Breast epithelium (tissue), 4 donors: ENCODE measurements at regions of chr20 and their contacts with region 1.

Region 1: GRCh38 chr20:44609511-44610312 is 27.3 kb downstream of the PKIG start:
- DNase-seq: peak; percentile 86 to 88
- H3K4me3 ChIP-seq: peak overlapping the region in 2 of 3 donors; percentile 20 to 32
- H3K27ac ChIP-seq: peak overlapping the region; percentile 60 to 86
- H3K4me1 ChIP-seq: no peaks in the 10 kb centered on the region
- H3K27me3 ChIP-seq: no peaks in the 10 kb centered on the region
- CTCF ChIP-seq: peak; percentile 86 to 99 (median 96)
- POLR2A ChIP-seq: no peak

Region 2: GRCh38 chr20:44204155-44204831 is 405.4 kb before region 1 on chr20:
- intact Hi-C with region 1: no loop called
- DNase-seq: no peak
- H3K4me3 ChIP-seq: no peak overlapping the region
- H3K27ac ChIP-seq: peak overlapping the region; percentile 81 to 86
- H3K4me1 ChIP-seq: peaks cover 0 to 12% of the 10 kb centered on the region in 2 donors
- H3K27me3 ChIP-seq: no peaks in the 10 kb centered on the region
- CTCF ChIP-seq: no peak
- POLR2A ChIP-seq: no peak

Region 3: DNA sequence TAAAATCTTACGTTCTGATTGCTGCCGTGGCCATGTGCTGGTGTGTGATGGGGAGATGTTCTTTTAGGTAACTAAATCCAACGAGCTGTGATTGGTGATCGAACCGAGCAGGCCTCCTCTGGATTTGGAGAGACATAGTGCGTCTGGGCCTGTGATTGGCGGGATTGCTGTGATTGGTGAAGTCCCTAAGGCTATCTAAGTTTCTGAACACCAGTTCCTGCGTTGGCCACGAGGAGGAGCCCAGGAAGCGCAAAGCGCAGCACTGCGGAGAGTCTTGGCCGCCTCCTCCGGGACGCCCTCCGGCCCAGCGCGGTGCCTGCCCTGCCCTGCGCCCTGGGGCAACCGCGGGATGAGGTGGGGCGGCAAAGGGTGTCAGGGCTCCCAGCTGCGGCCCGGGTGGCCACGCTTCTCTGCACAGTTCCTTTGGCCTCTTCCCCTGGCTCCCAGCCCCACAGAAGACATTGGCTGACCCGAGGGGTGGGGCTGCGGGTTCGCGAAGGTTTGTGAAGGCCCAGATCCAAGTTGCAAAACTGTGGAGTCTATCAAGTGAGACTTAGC is 221.2 kb before region 1 on chr20:
- intact Hi-C with region 1: loop called (anchors 5 kb)
- DNase-seq: no peak
- H3K4me3 ChIP-seq: peak overlapping the region in 1 of 3 donors; percentile 29
- H3K27ac ChIP-seq: no peak overlapping the region
- H3K4me1 ChIP-seq: peaks cover 0 to 6% of the 10 kb centered on the region in 2 donors
- H3K27me3 ChIP-seq: peaks cover 0 to 18% of the 10 kb centered on the region in 2 donors
- CTCF ChIP-seq: peak in 2 of 3 donors; percentile 42 to 70
- POLR2A ChIP-seq: no peak

Region 4: GRCh38 chr20:44532259-44532980 is 77.3 kb before region 1 on chr20:
- intact Hi-C with region 1: loop called (anchors 10 kb)
- DNase-seq: no peak
- H3K4me3 ChIP-seq: peak overlapping the region; percentile 82 to 91 (median 86)
- H3K27ac ChIP-seq: peak overlapping the region; percentile 86 to 88
- H3K4me1 ChIP-seq: no peaks in the 10 kb centered on the region
- H3K27me3 ChIP-seq: no peaks in the 10 kb centered on the region
- CTCF ChIP-seq: no peak
- POLR2A ChIP-seq: no peak

Region 5: DNA sequence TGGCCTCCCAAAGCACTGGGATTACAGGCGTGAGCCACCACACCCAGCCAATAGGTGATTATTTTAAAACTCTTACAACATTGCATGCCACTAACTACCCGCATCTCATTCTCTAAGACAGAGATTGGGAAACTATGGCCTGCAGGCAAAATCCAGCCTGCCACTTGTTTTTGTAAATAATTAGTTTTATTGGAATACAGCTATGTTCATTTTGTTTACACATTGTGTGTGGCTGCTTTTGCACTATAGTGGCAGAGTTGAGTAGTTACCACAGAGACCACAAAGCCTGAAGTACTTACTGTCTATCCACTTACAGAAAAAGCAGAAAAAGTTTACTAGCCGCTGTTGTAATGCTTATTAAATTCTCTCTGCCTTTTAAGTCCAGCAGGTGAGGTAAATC is 43.7 kb before region 1 on chr20:
- intact Hi-C with region 1: no loop called
- DNase-seq: no peak
- H3K4me3 ChIP-seq: no peak overlapping the region
- H3K27ac ChIP-seq: no peak overlapping the region
- H3K4me1 ChIP-seq: no peaks in the 10 kb centered on the region
- H3K27me3 ChIP-seq: no peaks in the 10 kb centered on the region
- CTCF ChIP-seq: no peak
- POLR2A ChIP-seq: no peak